ENCODE measurements at regions of chr12 and their contacts with region 1.

Region 1: GRCh38 chr12:89524541-89525285 is at the start of gene GALNT4:
- DNase-seq: peak; percentile 69 to 75
- ATAC-seq: peak; percentile 86 to 88
- H3K4me3 ChIP-seq: peak within 1 kb of the TSS; percentile 89 to 99 (median 96)
- H3K27ac ChIP-seq: peak within 1 kb of the TSS; percentile 86 to 94 (median 91)
- H3K4me1 ChIP-seq: peaks cover 40 to 47% of the 10 kb centered on the region in 2 donors
- H3K27me3 ChIP-seq: no peaks in the 10 kb centered on the region
- CTCF ChIP-seq: peak; percentile 51 to 77 (median 61)
- POLR2A ChIP-seq: peak; percentile 38 to 60
- total RNA-seq, gene GALNT4: 1.2 to 2.2 (median 1.7) TPM

Region 2: GRCh38 chr12:88035271-88035906 is 1489.3 kb before region 1 on chr12:
- in situ Hi-C with region 1: no loop called
- intact Hi-C with region 1: loop called (anchors 10 kb)
- DNase-seq: peak; percentile 81 to 82
- ATAC-seq: peak; percentile 94 to 96
- H3K4me3 ChIP-seq: peak overlapping the region; percentile 81 to 91 (median 86)
- H3K27ac ChIP-seq: peak overlapping the region; percentile 79 to 93 (median 86)
- H3K4me1 ChIP-seq: peaks cover 26 to 28% of the 10 kb centered on the region in 2 donors
- H3K27me3 ChIP-seq: no peaks in the 10 kb centered on the region
- CTCF ChIP-seq: no peak
- POLR2A ChIP-seq: peak; percentile 80 to 81

Region 3: DNA sequence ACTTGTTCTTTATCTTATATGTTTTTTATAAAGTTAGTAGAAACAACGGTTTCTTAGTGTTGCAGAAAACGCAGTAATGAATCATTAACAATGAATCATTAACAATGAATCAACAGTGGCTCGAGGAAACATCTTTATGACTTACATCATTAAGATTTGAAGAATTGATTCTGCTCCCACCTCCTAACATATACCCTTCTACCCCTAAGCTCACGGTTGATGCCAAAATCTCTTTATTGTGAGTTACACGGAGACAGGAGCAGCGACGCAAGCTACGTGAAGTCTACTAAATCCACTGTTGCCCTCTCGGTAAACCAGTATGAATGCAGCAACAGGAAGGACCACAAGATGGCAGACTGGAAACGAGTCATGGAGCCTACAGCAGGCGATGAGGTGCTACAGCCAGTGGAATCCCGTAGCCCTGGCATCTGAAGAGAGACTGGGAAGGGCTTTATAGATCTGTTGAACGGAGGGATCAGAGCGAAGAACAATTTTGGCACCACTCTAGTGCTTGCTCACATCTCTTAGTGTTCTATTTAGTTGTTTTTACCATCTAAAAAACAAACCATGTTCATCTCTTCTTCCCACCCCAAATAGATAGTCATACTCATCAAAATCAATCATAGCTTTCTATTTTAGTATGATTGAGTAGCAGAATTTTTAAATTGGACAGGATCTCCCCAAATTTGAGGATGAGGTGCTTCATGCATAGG is 505.1 kb before region 1 on chr12:
- in situ Hi-C with region 1: loop called in 2 of 4 experiments (anchors 5 to 10 kb)
- intact Hi-C with region 1: loop called (anchors 2 kb)
- DNase-seq: peak; percentile 55 to 59
- ATAC-seq: peak; percentile 90 to 92
- H3K4me3 ChIP-seq: peak overlapping the region; percentile 21 to 42 (median 36)
- H3K27ac ChIP-seq: no peak overlapping the region
- H3K4me1 ChIP-seq: peaks cover 0 to 6% of the 10 kb centered on the region in 2 donors
- H3K27me3 ChIP-seq: no peaks in the 10 kb centered on the region
- CTCF ChIP-seq: peak; percentile 48 to 83 (median 77)
- POLR2A ChIP-seq: no peak

Region 4: DNA sequence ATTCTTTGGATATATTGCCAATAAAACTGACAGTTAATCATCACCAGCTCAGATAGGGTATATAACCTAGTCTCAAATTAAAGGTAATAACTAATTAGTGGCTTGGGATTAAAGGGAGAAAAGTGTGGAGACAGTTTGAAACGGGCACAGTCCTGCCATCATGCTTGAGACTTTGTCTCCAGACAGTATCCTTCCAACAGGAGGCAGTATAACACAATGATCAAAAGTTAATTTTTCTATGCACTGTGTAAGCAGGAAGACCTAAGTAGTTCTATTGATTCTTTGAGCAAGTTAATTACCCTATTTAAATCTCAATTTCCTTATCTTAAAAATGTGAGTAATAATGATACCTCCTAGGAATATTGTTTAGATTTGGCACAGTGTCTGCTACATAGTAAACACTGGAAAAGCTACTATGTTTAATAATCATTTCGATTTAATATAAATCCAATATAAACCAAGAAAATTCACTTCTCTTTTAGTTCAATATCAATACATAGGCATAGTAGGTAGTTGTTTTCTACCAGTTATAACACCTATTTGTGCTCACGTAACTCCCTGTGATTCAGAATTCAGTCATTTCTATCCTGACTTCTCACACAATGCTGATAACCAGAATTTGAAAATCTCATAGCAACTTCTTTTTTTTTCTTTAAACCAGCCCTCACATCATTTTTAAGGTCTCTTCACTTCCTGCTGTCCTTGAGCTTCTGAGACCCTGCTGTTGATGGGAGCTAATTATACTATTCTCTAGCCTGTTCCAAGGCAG is 53.8 kb before region 1 on chr12:
- in situ Hi-C with region 1: loop called in 2 of 4 experiments (anchors 5 to 10 kb)
- intact Hi-C with region 1: loop called (anchors 2 kb)
- DNase-seq: no peak
- ATAC-seq: peak; percentile 53 to 54
- H3K4me3 ChIP-seq: no peak overlapping the region
- H3K27ac ChIP-seq: no peak overlapping the region
- H3K4me1 ChIP-seq: no peaks in the 10 kb centered on the region
- H3K27me3 ChIP-seq: no peaks in the 10 kb centered on the region
- CTCF ChIP-seq: peak in 4 of 5 experiments; percentile 14 to 62 (median 40)
- POLR2A ChIP-seq: no peak

Region 5: GRCh38 chr12:89709157-89709994 is 184.7 kb after region 1 on chr12:
- in situ Hi-C with region 1: no loop called
- intact Hi-C with region 1: loop called (anchors 5 kb)
- DNase-seq: peak; percentile 98 to 99
- ATAC-seq: peak; percentile 82 to 84
- H3K4me3 ChIP-seq: peak overlapping the region; percentile 76 to 96 (median 92)
- H3K27ac ChIP-seq: peak overlapping the region; percentile 97 to 99 (median 98)
- H3K4me1 ChIP-seq: peaks cover 18 to 34% of the 10 kb centered on the region in 2 donors
- H3K27me3 ChIP-seq: no peaks in the 10 kb centered on the region
- CTCF ChIP-seq: peak in 2 of 5 experiments; percentile 42 to 59
- POLR2A ChIP-seq: peak; percentile 97 to 98

Region 6: DNA sequence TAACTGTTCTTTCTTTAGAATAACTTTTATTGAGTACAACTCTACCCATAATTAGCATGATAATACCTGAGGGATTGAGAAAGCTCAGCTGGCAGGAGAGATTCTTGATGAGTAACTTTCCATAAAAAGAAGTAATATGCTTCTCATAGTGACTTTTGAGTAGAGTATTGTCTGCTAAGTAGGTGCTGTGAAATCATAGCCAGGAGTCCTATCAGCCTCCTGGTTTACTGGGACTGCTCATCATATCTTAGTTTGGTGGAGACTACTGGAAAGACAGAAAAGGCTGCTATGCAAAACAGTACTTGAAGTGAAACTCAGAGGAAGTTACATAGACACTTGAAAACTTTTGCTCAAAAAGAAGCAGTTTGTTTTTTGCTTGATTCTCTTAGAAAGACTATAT is 297.2 kb after region 1 on chr12:
- in situ Hi-C with region 1: no loop called
- intact Hi-C with region 1: no loop called
- DNase-seq: no peak
- ATAC-seq: no peak
- H3K4me3 ChIP-seq: no peak overlapping the region
- H3K27ac ChIP-seq: no peak overlapping the region
- H3K4me1 ChIP-seq: no peaks in the 10 kb centered on the region
- H3K27me3 ChIP-seq: no peaks in the 10 kb centered on the region
- CTCF ChIP-seq: no peak
- POLR2A ChIP-seq: no peak

Region 7: GRCh38 chr12:90940872-90941499 is 1416.3 kb after region 1 on chr12:
- in situ Hi-C with region 1: loop called in 1 of 4 experiments (anchors 25 kb)
- intact Hi-C with region 1: no loop called
- DNase-seq: no peak
- ATAC-seq: no peak
- H3K4me3 ChIP-seq: no peak overlapping the region
- H3K27ac ChIP-seq: no peak overlapping the region
- H3K4me1 ChIP-seq: no peaks in the 10 kb centered on the region
- H3K27me3 ChIP-seq: no peaks in the 10 kb centered on the region
- CTCF ChIP-seq: peak in 2 of 5 experiments; percentile 26 to 35
- POLR2A ChIP-seq: no peak

Region 8: DNA sequence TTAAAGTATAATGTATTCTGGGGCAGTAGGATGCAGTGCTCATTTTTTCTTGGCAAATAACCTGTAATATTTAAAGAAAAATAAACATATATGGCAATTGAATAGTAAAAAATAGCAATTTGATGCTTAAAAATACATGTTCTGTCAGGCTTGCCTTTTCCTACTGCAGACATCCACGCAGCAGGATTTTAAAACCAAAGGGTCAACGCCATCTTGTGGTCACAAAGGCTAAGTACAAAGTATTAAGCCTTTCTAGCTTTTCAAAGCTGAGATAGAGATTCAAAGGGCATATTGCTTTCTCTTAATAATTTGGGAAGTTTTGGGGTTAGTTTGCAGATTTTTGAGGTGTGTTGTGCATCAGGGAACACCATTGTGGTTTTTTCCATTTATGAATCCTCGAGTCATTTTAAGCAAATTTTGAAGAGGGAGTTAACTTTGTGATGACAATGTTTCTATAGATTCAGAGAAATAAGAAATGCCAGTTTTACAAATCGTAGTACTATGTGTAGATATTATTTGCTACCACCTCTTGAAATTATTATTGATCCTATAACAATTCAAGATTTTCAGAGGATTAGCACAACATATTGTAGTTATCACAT is 1434.9 kb after region 1 on chr12:
- in situ Hi-C with region 1: loop called in 1 of 4 experiments (anchors 25 kb)
- intact Hi-C with region 1: no loop called
- DNase-seq: no peak
- ATAC-seq: peak in 1 of 2 donors; percentile 58
- H3K4me3 ChIP-seq: no peak overlapping the region
- H3K27ac ChIP-seq: no peak overlapping the region
- H3K4me1 ChIP-seq: no peaks in the 10 kb centered on the region
- H3K27me3 ChIP-seq: no peaks in the 10 kb centered on the region
- CTCF ChIP-seq: peak in 4 of 5 experiments; percentile 41 to 67 (median 54)
- POLR2A ChIP-seq: no peak